CD4-positive, alpha-beta memory T cell (primary cell): ENCODE measurements at regions of chr17 and their contacts with region 1.

Region 1: GRCh38 chr17:21043286-21044232 is 748 bp upstream of the USP22 start:
- DNase-seq: peak; percentile 95 to 99 (median 97)
- H3K4me3 ChIP-seq: peak overlapping the region; percentile 3 to 62
- H3K4me3 Mint-ChIP-seq: peak overlapping the region; percentile 80 to 88 (median 85)
- H3K27ac ChIP-seq: peak overlapping the region; percentile 97
- H3K27ac Mint-ChIP-seq: peak overlapping the region; percentile 93 to 98 (median 95)
- H3K4me1 ChIP-seq: peaks cover 28% of the 10 kb centered on the region
- H3K4me1 Mint-ChIP-seq: peaks cover 18 to 48% (median 28%) of the 10 kb centered on the region in 4 donors
- H3K27me3 ChIP-seq: no peaks in the 10 kb centered on the region
- H3K27me3 Mint-ChIP-seq: no peaks in the 10 kb centered on the region

Region 2: GRCh38 chr17:20975566-20975965 is 68.0 kb before region 1 on chr17:
- CTCF ChIA-PET with region 1: no interaction called
- POLR2A ChIA-PET with region 1: no interaction called
- intact Hi-C with region 1: no loop called
- DNase-seq: no peak
- H3K4me3 ChIP-seq: no peak overlapping the region
- H3K4me3 Mint-ChIP-seq: no peak overlapping the region
- H3K27ac ChIP-seq: no peak overlapping the region
- H3K27ac Mint-ChIP-seq: no peak overlapping the region
- H3K4me1 ChIP-seq: no peaks in the 10 kb centered on the region
- H3K4me1 Mint-ChIP-seq: no peaks in the 10 kb centered on the region
- H3K27me3 ChIP-seq: peaks cover 5% of the 10 kb centered on the region
- H3K27me3 Mint-ChIP-seq: peaks cover 30 to 33% of the 10 kb centered on the region in 2 donors

Region 3: GRCh38 chr17:20992987-20993862 is 50.3 kb before region 1 on chr17:
- CTCF ChIA-PET with region 1: interaction called, 6 read pairs
- POLR2A ChIA-PET with region 1: no interaction called
- intact Hi-C with region 1: loop called (anchors 2 kb)
- DNase-seq: peak; percentile 52 to 66 (median 57)
- H3K4me3 ChIP-seq: no peak overlapping the region
- H3K4me3 Mint-ChIP-seq: peak overlapping the region in 1 of 8 donors; percentile 10
- H3K27ac ChIP-seq: no peak overlapping the region
- H3K27ac Mint-ChIP-seq: peak overlapping the region in 2 of 7 donors; percentile 17 to 46
- H3K4me1 ChIP-seq: no peaks in the 10 kb centered on the region
- H3K4me1 Mint-ChIP-seq: peaks cover 0 to 5% (median 2%) of the 10 kb centered on the region in 4 donors
- H3K27me3 ChIP-seq: no peaks in the 10 kb centered on the region
- H3K27me3 Mint-ChIP-seq: no peaks in the 10 kb centered on the region

Region 4: GRCh38 chr17:21025451-21025850 is 18.1 kb before region 1 on chr17:
- CTCF ChIA-PET with region 1: interaction called, 19 read pairs
- POLR2A ChIA-PET with region 1: interaction called, 6 read pairs
- intact Hi-C with region 1: loop called (anchors 1 kb)
- DNase-seq: no peak
- H3K4me3 ChIP-seq: no peak overlapping the region
- H3K4me3 Mint-ChIP-seq: peak overlapping the region in 2 of 8 donors; percentile 5 to 13
- H3K27ac ChIP-seq: no peak overlapping the region
- H3K27ac Mint-ChIP-seq: peak overlapping the region in 3 of 7 donors; percentile 9 to 61 (median 18)
- H3K4me1 ChIP-seq: peaks cover 45% of the 10 kb centered on the region
- H3K4me1 Mint-ChIP-seq: peaks cover 44 to 71% (median 57%) of the 10 kb centered on the region in 4 donors
- H3K27me3 ChIP-seq: no peaks in the 10 kb centered on the region
- H3K27me3 Mint-ChIP-seq: no peaks in the 10 kb centered on the region

Region 5: GRCh38 chr17:21126645-21127510 is 83.3 kb after region 1 on chr17 and contains the start of gene DHRS7B:
- CTCF ChIA-PET with region 1: interaction called, 5 read pairs
- POLR2A ChIA-PET with region 1: interaction called, 17 read pairs
- intact Hi-C with region 1: loop called (anchors 1 kb)
- DNase-seq: peak; percentile 94 to 97 (median 94)
- H3K4me3 ChIP-seq: peak within 1 kb of the TSS; percentile 31 to 97
- H3K4me3 Mint-ChIP-seq: peak within 1 kb of the TSS; percentile 91 to 98 (median 96)
- H3K27ac ChIP-seq: peak within 1 kb of the TSS; percentile 85
- H3K27ac Mint-ChIP-seq: peak within 1 kb of the TSS; percentile 95 to 99 (median 97)
- H3K4me1 ChIP-seq: peaks cover 27% of the 10 kb centered on the region
- H3K4me1 Mint-ChIP-seq: peaks cover 20 to 42% (median 35%) of the 10 kb centered on the region in 4 donors
- H3K27me3 ChIP-seq: no peaks in the 10 kb centered on the region
- H3K27me3 Mint-ChIP-seq: no peaks in the 10 kb centered on the region
- total RNA-seq, gene DHRS7B: 8.2 to 9.5 TPM

Region 6: DNA sequence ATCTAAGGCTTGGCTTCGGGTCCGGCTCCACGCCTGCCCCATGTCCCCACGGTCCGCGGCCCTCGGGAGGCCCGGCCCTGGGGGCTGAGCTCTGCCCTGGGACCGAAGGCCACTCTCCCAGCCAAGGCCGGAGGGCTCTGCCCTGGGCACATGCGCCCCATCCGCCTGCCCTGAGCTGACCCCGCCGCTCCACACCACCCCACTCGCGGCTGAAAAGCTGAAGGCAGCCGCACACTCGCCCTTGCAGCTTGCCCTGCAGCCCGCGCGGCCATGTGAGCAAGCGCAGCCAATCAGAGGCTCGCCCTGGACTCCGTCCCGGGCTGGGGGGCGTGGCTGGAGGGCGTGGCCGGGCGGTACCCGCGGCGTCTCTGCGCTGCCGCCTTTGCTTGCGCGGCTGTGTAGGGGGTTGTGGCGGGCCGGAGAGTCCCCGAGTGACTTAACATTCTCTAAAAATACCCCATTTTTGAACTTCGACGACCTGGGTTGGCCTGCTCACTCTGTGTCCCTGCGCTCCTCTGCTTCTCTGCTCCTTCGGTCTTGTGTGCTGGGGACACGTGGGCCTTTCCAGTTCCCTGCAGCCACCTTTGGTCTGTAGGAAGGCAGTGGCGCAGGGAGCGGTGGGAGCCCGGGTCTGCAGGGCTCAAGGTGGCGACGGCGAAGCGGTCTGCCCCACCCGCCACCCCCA is 232.2 kb after region 1 on chr17:
- CTCF ChIA-PET with region 1: interaction called, 4 read pairs
- POLR2A ChIA-PET with region 1: interaction called, 12 read pairs
- intact Hi-C with region 1: no loop called
- DNase-seq: peak; percentile 85 to 93 (median 87)
- H3K4me3 ChIP-seq: peak overlapping the region; percentile 26 to 71
- H3K4me3 Mint-ChIP-seq: peak overlapping the region; percentile 86 to 99 (median 90)
- H3K27ac ChIP-seq: peak overlapping the region; percentile 77
- H3K27ac Mint-ChIP-seq: peak overlapping the region; percentile 78 to 95 (median 93)
- H3K4me1 ChIP-seq: peaks cover 49% of the 10 kb centered on the region
- H3K4me1 Mint-ChIP-seq: peaks cover 32 to 52% (median 39%) of the 10 kb centered on the region in 4 donors
- H3K27me3 ChIP-seq: no peaks in the 10 kb centered on the region
- H3K27me3 Mint-ChIP-seq: no peaks in the 10 kb centered on the region